Activated CD4-positive, alpha-beta memory T cell treated with anti-CD3 and anti-CD28 coated beads for 36 hours (primary cell): ENCODE measurements at regions of chr19 and their contacts with region 1.

Region 1: DNA sequence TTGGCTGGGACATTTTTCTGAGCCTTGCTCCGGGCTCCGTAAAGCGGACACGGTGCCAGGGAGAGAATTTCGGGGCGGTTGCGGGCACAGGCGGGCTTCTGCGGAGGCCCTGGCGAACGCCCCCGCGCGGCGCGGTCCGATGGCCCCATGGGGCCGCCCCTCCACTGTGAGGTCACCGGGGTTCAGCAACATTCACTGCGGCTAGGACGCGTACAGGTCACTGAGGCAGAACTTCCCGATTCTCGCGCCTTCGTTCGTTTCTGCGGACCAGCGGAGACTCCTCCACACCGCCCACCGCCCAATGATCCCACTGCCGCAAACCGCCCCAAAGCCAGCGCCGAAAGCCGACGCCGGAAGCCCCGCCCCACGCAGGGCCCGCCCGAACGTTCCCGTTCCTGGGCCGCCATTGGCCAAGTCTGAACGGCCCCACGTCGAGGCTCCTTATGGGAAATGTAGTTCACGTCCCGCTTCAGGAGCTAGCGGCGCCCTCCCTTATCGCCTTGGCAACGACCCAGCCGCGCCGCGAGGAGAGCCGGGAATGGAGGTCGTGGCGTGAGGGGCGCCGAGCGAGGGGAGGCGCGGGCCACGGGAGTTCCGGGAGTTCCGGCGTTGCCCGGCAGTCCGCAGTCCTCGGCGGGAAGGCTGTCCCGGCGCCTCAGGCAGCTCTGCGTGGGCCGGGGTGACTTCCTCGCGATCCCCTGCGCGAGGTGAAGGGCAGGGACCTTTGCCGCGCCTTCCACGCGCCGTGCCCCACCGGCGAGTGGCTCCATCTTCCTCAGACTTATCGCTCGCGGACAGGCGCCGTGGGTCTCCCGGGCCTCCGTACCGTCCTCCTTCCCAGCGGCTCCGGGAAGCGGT is at the start of gene ZNF584:
- DNase-seq: peak; percentile 97
- H3K4me3 Mint-ChIP-seq: peak within 1 kb of the TSS; percentile 83
- H3K27ac Mint-ChIP-seq: peak within 1 kb of the TSS; percentile 95
- H3K4me1 Mint-ChIP-seq: peaks cover 31% of the 10 kb centered on the region
- H3K27me3 Mint-ChIP-seq: no peaks in the 10 kb centered on the region
- total RNA-seq, gene ZNF584: 8.3 to 10.7 TPM

Region 2: GRCh38 chr19:57914531-57914930 is 493.9 kb before region 1 on chr19:
- CTCF ChIA-PET with region 1: no interaction called
- POLR2A ChIA-PET with region 1: no interaction called
- intact Hi-C with region 1: loop called (anchors 10 kb)
- DNase-seq: no peak
- H3K4me3 Mint-ChIP-seq: no peak overlapping the region
- H3K27ac Mint-ChIP-seq: no peak overlapping the region
- H3K4me1 Mint-ChIP-seq: peaks cover 28% of the 10 kb centered on the region
- H3K27me3 Mint-ChIP-seq: no peaks in the 10 kb centered on the region

Region 3: DNA sequence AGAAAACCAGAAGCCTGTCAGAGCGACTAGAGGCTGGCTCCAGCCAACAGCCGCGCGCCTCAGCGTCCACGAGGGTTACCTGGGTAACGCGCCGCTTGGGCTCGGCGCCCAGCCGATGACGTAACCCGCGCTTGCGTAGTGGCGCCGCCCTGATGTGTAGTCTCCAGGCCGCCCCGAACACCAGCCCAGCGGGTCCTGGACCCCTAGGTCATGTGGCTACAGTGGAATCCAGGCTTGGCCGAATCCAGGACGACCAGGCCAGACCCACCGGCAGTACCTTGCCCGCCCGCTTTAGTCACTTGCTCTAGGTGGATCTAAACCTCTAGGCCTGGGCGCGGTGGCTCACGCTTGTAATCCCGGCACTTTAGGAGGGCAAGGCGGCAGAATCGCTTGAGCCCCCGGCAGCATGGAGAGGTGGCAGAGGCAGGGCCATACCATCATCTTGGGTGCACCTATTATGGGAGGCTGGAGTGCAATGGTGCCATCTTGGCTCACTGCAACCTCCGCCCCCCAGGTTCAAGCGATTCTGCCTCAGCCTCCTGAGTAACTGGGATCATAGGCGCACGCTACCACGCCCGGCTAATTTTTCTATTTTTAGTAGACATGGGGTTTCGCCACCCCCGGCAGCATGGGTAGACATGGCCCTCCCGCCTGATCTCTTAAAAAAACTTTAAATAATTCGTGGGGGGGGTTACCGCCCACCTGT is 398.6 kb before region 1 on chr19:
- CTCF ChIA-PET with region 1: no interaction called
- POLR2A ChIA-PET with region 1: no interaction called
- intact Hi-C with region 1: no loop called
- DNase-seq: peak; percentile 66
- H3K4me3 Mint-ChIP-seq: peak overlapping the region; percentile 49
- H3K27ac Mint-ChIP-seq: no peak overlapping the region
- H3K4me1 Mint-ChIP-seq: no peaks in the 10 kb centered on the region
- H3K27me3 Mint-ChIP-seq: peaks cover 2% of the 10 kb centered on the region

Region 4: GRCh38 chr19:58326914-58327726 is 81.3 kb before region 1 on chr19 and contains the start of gene ZSCAN22:
- CTCF ChIA-PET with region 1: no interaction called
- POLR2A ChIA-PET with region 1: no interaction called
- intact Hi-C with region 1: loop called (anchors 5 kb)
- DNase-seq: peak; percentile 95
- H3K4me3 Mint-ChIP-seq: no peak within 1 kb of the TSS
- H3K27ac Mint-ChIP-seq: no peak within 1 kb of the TSS
- H3K4me1 Mint-ChIP-seq: peaks cover 4% of the 10 kb centered on the region
- H3K27me3 Mint-ChIP-seq: no peaks in the 10 kb centered on the region
- total RNA-seq, gene ZSCAN22: 3.1 to 3.3 TPM

Region 5: DNA sequence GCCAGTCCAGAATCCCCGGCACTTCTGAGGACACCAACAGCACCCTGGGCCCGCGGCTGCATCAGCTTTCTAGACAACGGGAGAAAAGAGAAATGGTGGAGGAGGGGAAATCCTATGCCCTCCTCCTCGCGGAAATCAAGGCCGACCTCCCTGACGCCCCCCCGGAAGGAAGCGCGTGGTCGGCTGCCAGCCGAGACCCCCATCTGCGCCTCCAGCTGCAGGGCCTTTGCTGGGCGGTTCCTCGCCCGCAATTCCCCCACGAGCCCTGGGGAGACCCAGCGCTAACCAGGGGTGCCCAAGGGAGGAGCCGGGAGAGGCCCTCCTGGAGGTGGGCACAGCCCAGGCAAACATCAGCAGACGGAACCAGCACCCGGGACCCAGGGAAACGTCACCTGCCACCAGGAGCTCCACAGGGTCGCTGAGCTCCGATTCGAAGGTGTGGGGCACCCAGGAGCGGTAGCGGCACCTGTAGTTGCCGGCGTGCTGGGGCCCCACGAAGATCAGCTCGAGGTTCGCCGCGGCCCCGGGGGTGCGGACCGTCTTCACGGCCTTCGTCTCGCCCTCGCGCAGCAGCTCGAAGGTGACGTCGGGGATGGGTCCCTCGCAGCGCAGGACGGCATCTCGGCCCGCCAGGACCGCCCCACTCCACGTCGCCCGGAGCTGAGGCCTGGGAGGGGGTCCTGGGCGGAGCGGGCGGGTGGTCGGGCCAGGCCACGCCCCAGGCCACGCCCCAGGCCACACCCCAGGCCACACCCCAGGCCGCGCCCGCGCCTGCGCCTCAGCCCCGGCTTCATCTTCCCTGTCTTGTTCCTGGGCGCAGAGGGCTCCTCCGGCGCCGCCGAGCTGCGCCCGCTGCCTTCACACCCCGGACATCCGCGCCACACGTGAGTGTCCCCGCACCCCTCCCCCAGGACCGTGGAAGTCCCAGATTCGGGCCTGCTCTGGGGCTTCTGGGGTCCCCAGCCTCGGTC is 61.1 kb before region 1 on chr19:
- CTCF ChIA-PET with region 1: no interaction called
- POLR2A ChIA-PET with region 1: no interaction called
- intact Hi-C with region 1: loop called (anchors 5 kb)
- DNase-seq: peak; percentile 74
- H3K4me3 Mint-ChIP-seq: peak overlapping the region; percentile 92
- H3K27ac Mint-ChIP-seq: peak overlapping the region; percentile 42
- H3K4me1 Mint-ChIP-seq: peaks cover 21% of the 10 kb centered on the region
- H3K27me3 Mint-ChIP-seq: peaks cover 4% of the 10 kb centered on the region

Region 6: GRCh38 chr19:58386576-58387337 is 21.6 kb before region 1 on chr19 and contains the start of gene RPS5:
- CTCF ChIA-PET with region 1: interaction called, 3 read pairs
- POLR2A ChIA-PET with region 1: interaction called, 4 read pairs
- intact Hi-C with region 1: loop called (anchors 1 kb)
- DNase-seq: peak; percentile 97
- H3K4me3 Mint-ChIP-seq: peak within 1 kb of the TSS; percentile 94
- H3K27ac Mint-ChIP-seq: peak within 1 kb of the TSS; percentile 95
- H3K4me1 Mint-ChIP-seq: peaks cover 44% of the 10 kb centered on the region
- H3K27me3 Mint-ChIP-seq: no peaks in the 10 kb centered on the region
- total RNA-seq, gene RPS5: 1,415 to 1,438 TPM

Region 7: GRCh38 chr19:58439576-58440554 is 31.5 kb after region 1 on chr19 and contains the start of gene ZNF132:
- CTCF ChIA-PET with region 1: no interaction called
- POLR2A ChIA-PET with region 1: interaction called, 3 read pairs
- intact Hi-C with region 1: loop called (anchors 5 kb)
- DNase-seq: peak; percentile 97
- H3K4me3 Mint-ChIP-seq: peak within 1 kb of the TSS; percentile 84
- H3K27ac Mint-ChIP-seq: peak within 1 kb of the TSS; percentile 71
- H3K4me1 Mint-ChIP-seq: peaks cover 25% of the 10 kb centered on the region
- H3K27me3 Mint-ChIP-seq: no peaks in the 10 kb centered on the region
- total RNA-seq, gene ZNF132: 3.1 to 3.6 TPM

Region 8: DNA sequence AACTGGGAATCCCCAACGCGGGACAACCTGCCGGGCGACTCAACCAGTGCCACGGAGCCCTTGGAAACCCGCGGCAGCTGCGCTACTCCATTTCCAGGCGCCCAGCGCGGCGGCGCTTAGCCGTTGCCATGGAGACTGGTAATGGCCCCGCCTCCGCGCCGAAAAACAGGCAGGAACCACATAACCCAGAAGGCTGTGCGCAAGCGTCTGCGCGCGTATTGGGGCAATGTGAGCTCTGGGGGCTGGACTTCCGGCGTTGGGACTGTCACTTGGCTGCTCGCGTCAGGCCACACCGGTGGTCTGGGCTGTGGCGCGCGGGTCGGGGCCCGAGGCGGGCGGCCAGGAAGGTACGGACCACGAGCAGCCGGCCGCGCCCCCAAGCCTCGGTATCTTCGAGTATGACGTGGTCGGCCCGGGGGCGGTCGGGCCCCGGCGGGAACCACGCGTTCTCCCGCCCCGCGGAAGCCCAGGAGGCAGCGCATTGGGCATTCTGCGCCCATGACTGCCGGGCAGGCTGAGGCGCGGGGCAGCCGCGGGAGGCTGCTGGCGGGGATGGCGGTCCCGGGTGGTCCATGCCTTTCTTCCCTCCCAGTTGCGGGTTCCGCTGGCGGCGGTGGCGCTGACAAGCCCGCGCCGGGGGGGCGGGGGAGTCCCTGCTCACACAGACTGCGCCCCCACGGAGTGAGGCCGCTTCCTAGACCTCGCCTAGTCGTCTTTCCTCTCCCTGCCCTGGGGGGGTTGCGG is 43.1 kb after region 1 on chr19 and contains the start of gene ZNF324B:
- CTCF ChIA-PET with region 1: no interaction called
- POLR2A ChIA-PET with region 1: interaction called, 3 read pairs
- intact Hi-C with region 1: loop called (anchors 1 kb)
- DNase-seq: peak; percentile 97
- H3K4me3 Mint-ChIP-seq: peak within 1 kb of the TSS; percentile 78
- H3K27ac Mint-ChIP-seq: no peak within 1 kb of the TSS
- H3K4me1 Mint-ChIP-seq: peaks cover 21% of the 10 kb centered on the region
- H3K27me3 Mint-ChIP-seq: peaks cover 13% of the 10 kb centered on the region
- total RNA-seq, gene ZNF324B: 7.7 to 7.8 TPM

Region 9: GRCh38 chr19:58482372-58482771 is 74.0 kb after region 1 on chr19:
- CTCF ChIA-PET with region 1: no interaction called
- POLR2A ChIA-PET with region 1: no interaction called
- intact Hi-C with region 1: no loop called
- DNase-seq: no peak
- H3K4me3 Mint-ChIP-seq: no peak overlapping the region
- H3K27ac Mint-ChIP-seq: no peak overlapping the region
- H3K4me1 Mint-ChIP-seq: no peaks in the 10 kb centered on the region
- H3K27me3 Mint-ChIP-seq: no peaks in the 10 kb centered on the region